Heart right ventricle (tissue), 16 donors: ENCODE measurements at regions of chr11 and their contacts with region 1.

Region 1: GRCh38 chr11:96342961-96343711 is at the start of gene MAML2:
- DNase-seq: peak; percentile 90 to 93
- ATAC-seq: peak; percentile 89 to 97 (median 93)
- H3K4me3 ChIP-seq: peak within 1 kb of the TSS; percentile 36 to 78 (median 64)
- H3K27ac ChIP-seq: peak within 1 kb of the TSS in 9 of 10 donors; percentile 66 to 92 (median 83)
- H3K4me1 ChIP-seq: peaks cover under 1 to 44% (median 36%) of the 10 kb centered on the region in 9 donors
- H3K27me3 ChIP-seq: no peaks in the 10 kb centered on the region
- CTCF ChIP-seq: peak; percentile 90 to 100 (median 98)
- total RNA-seq, gene MAML2: 2.9 to 6.1 (median 4.5) TPM

Region 2: GRCh38 chr11:95835768-95836488 is 507.2 kb before region 1 on chr11:
- intact Hi-C with region 1: loop called in 5 of 10 experiments (anchors 5 to 10 kb)
- DNase-seq: peak in 1 of 2 donors; percentile 60
- ATAC-seq: peak; percentile 79 to 97 (median 94)
- H3K4me3 ChIP-seq: no peak overlapping the region
- H3K27ac ChIP-seq: peak overlapping the region in 4 of 10 donors; percentile 24 to 42 (median 30)
- H3K4me1 ChIP-seq: peaks cover 0 to 8% (median 0%) of the 10 kb centered on the region in 9 donors
- H3K27me3 ChIP-seq: no peaks in the 10 kb centered on the region
- CTCF ChIP-seq: peak; percentile 77 to 93 (median 87)

Region 3: GRCh38 chr11:95923728-95924413 is 419.3 kb before region 1 on chr11 and contains the start of gene MTMR2:
- intact Hi-C with region 1: loop called in 3 of 10 experiments (anchors 5 to 10 kb)
- DNase-seq: peak; percentile 80 to 83
- ATAC-seq: peak; percentile 99 to 100 (median 100)
- H3K4me3 ChIP-seq: peak within 1 kb of the TSS; percentile 63 to 96 (median 84)
- H3K27ac ChIP-seq: peak within 1 kb of the TSS; percentile 86 to 98 (median 94)
- H3K4me1 ChIP-seq: peaks cover 0 to 42% (median 29%) of the 10 kb centered on the region in 9 donors
- H3K27me3 ChIP-seq: no peaks in the 10 kb centered on the region
- CTCF ChIP-seq: peak in 1 of 9 donors; percentile 5
- total RNA-seq, gene MTMR2: 16.3 to 23.1 (median 20.3) TPM

Region 4: DNA sequence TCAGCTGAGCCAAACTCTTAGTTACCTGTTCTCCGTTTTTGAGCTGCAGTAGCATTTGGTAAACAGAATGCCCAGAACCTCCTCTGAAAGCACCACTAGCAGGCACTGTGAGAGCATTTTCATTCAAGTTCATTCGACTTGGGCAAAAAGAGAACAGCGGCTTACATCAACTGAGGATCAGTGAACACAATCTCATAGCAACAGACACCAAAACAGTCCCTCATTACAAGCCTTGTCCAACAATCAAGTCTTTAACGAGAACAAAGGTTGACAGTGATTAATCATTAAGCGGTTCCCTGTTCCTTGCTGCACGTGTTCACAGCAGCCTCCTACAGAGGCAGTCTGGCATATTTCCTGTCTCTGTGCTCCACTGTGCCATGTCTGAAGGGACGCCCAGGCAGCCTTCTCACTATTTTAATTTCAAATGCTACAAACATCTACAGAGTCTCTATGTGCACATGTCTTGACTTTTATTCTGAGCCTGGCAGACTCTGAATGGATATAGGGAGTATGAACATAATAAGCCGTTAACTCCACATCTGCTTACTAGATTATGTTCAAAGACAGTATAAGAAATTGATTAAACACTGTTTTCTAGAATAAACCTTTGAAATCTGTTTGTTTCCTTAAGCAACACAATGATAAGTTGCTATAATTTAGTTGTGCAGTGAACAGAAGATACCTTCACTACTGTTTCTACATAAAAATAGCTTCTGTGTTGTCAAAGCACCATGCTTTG is 330.9 kb before region 1 on chr11:
- intact Hi-C with region 1: loop called in 2 of 10 experiments (anchors 1 to 5 kb)
- DNase-seq: peak in 1 of 2 donors; percentile 43
- ATAC-seq: peak; percentile 64 to 91 (median 80)
- H3K4me3 ChIP-seq: peak overlapping the region in 1 of 10 donors; percentile 0
- H3K27ac ChIP-seq: peak overlapping the region in 7 of 10 donors; percentile 5 to 65 (median 42)
- H3K4me1 ChIP-seq: peaks cover 0 to 32% (median 9%) of the 10 kb centered on the region in 9 donors
- H3K27me3 ChIP-seq: no peaks in the 10 kb centered on the region
- CTCF ChIP-seq: peak in 8 of 9 donors; percentile 10 to 66 (median 44)

Region 5: GRCh38 chr11:96207459-96208449 is 135.4 kb before region 1 on chr11:
- intact Hi-C with region 1: loop called in 1 of 10 experiments (anchors 5 kb)
- DNase-seq: no peak
- ATAC-seq: peak in 7 of 8 donors; percentile 63 to 79 (median 75)
- H3K4me3 ChIP-seq: no peak overlapping the region
- H3K27ac ChIP-seq: peak overlapping the region in 9 of 10 donors; percentile 7 to 84 (median 51)
- H3K4me1 ChIP-seq: peaks cover 0 to 64% (median 36%) of the 10 kb centered on the region in 9 donors
- H3K27me3 ChIP-seq: no peaks in the 10 kb centered on the region
- CTCF ChIP-seq: no peak

Region 6: DNA sequence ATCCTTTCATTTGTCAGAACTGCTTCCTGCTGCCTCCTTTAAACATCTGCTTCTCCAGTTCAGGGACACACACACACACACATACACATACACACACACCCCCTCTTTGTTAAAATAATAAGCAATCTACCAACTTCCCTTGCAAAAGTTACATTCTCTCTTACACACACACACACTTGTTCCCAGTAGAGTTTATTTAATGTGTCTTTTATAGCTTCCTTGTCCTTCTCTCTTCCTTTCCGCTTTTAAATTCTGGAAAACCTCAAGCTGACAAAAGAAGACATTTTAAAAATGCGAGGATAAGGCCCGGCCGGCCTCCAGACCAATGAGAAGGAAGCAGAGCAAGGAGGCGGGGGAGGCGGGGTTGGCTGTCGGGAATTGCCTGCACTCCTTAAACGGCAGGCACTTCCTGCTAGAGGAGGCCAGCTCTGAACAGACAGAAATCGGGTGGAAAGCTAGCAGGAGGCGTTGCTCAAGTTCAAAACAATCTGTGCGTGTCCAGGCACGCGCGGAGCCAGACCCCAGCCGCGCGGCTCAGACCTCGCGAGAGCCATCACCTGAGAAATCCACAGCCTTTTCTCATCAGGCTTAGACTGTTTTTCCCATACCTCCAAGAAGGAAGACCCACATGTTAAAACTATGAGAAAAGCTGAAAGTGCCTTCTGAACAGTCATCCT is 100.0 kb before region 1 on chr11:
- intact Hi-C with region 1: loop called in 4 of 10 experiments (anchors 2 to 10 kb)
- DNase-seq: peak; percentile 90 to 96
- ATAC-seq: peak; percentile 98 to 100 (median 99)
- H3K4me3 ChIP-seq: peak overlapping the region in 9 of 10 donors; percentile 20 to 60 (median 53)
- H3K27ac ChIP-seq: peak overlapping the region; percentile 50 to 90 (median 78)
- H3K4me1 ChIP-seq: peaks cover 0 to 50% (median 18%) of the 10 kb centered on the region in 9 donors
- H3K27me3 ChIP-seq: no peaks in the 10 kb centered on the region
- CTCF ChIP-seq: no peak

Region 7: DNA sequence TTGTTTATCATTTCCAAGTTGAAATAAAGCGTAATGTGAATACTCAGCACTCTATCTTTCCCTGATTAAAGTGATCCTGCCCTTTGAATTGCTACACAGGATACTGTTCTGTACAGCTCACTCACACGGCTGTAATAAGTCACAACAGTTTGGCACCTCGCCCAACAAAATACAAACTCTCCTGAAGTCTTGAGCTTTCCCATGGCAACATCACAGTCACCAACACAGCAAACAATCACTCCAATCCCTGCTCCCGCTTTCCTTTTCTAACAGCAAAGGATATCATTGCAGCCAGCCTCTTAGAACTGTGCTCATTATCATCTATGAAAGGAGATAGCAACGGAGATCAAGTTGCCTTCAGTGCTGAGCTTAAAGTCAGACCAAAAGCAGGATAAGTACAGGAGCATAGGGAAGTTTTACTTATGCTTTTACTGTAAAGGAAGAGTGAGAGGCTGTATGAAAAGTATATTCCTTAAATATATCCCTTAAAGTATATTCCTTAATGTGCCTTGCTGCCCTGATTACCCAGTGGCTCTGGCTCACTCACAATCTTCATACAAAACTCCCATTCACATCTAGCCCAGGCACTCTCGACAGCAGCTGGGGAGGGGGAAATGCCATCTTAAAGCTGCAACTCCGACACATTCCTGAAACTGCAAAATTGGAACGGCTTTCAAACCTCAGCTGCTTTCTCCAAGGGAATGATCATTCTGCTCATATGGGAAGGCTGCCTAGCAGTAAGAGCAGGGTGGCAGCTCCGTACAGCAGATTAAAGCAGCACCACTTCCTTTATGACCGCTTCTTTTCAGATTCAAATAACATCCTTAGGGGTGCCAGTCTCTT is 36.0 kb before region 1 on chr11:
- intact Hi-C with region 1: loop called in 2 of 10 experiments (anchors 5 kb)
- DNase-seq: peak in 1 of 2 donors; percentile 96
- ATAC-seq: peak; percentile 92 to 98 (median 95)
- H3K4me3 ChIP-seq: peak overlapping the region in 9 of 10 donors; percentile 7 to 48 (median 34)
- H3K27ac ChIP-seq: peak overlapping the region; percentile 38 to 89 (median 79)
- H3K4me1 ChIP-seq: peaks cover 3 to 100% (median 78%) of the 10 kb centered on the region in 9 donors
- H3K27me3 ChIP-seq: no peaks in the 10 kb centered on the region
- CTCF ChIP-seq: no peak